Activated naive CD4-positive, alpha-beta T cell treated with anti-CD3 and anti-CD28 coated beads, Interleukin-2, amount 10 ng/mL, durations not matched to agents 7 days and 5 days (primary cell): ENCODE measurements at regions of chr2 and their contacts with region 1.

Region 1: GRCh38 chr2:24827321-24828237 is 34.4 kb downstream of the CENPO start:
- DNase-seq: peak; percentile 81
- H3K4me3 Mint-ChIP-seq: no peak overlapping the region
- H3K27ac Mint-ChIP-seq: peak overlapping the region; percentile 2
- H3K4me1 Mint-ChIP-seq: peaks cover 18% of the 10 kb centered on the region
- H3K27me3 Mint-ChIP-seq: no peaks in the 10 kb centered on the region

Region 2: GRCh38 chr2:24409700-24410556 is 417.7 kb before region 1 on chr2:
- CTCF ChIA-PET with region 1: interaction called, 55 read pairs
- DNase-seq: peak; percentile 51
- H3K4me3 Mint-ChIP-seq: no peak overlapping the region
- H3K27ac Mint-ChIP-seq: no peak overlapping the region
- H3K4me1 Mint-ChIP-seq: no peaks in the 10 kb centered on the region
- H3K27me3 Mint-ChIP-seq: peaks cover 6% of the 10 kb centered on the region

Region 3: GRCh38 chr2:24421668-24422067 is 405.9 kb before region 1 on chr2:
- CTCF ChIA-PET with region 1: interaction called, 82 read pairs
- DNase-seq: peak; percentile 70
- H3K4me3 Mint-ChIP-seq: no peak overlapping the region
- H3K27ac Mint-ChIP-seq: no peak overlapping the region
- H3K4me1 Mint-ChIP-seq: no peaks in the 10 kb centered on the region
- H3K27me3 Mint-ChIP-seq: peaks cover 18% of the 10 kb centered on the region

Region 4: GRCh38 chr2:24613154-24613814 is 214.3 kb before region 1 on chr2:
- CTCF ChIA-PET with region 1: interaction called, 39 read pairs
- DNase-seq: peak; percentile 56
- H3K4me3 Mint-ChIP-seq: no peak overlapping the region
- H3K27ac Mint-ChIP-seq: peak overlapping the region; percentile 64
- H3K4me1 Mint-ChIP-seq: peaks cover 5% of the 10 kb centered on the region
- H3K27me3 Mint-ChIP-seq: no peaks in the 10 kb centered on the region

Region 5: GRCh38 chr2:24792874-24793760 is 34.5 kb before region 1 on chr2 and contains the starts of genes CENPO and PTRHD1:
- CTCF ChIA-PET with region 1: interaction called, 17 read pairs
- DNase-seq: peak; percentile 97
- H3K4me3 Mint-ChIP-seq: peak within 1 kb of the TSS; percentile 90
- H3K27ac Mint-ChIP-seq: peak within 1 kb of the TSS; percentile 97
- H3K4me1 Mint-ChIP-seq: peaks cover 44% of the 10 kb centered on the region
- H3K27me3 Mint-ChIP-seq: no peaks in the 10 kb centered on the region

Region 6: GRCh38 chr2:24855726-24856125 is 28.1 kb after region 1 on chr2:
- CTCF ChIA-PET with region 1: no interaction called
- DNase-seq: no peak
- H3K4me3 Mint-ChIP-seq: no peak overlapping the region
- H3K27ac Mint-ChIP-seq: no peak overlapping the region
- H3K4me1 Mint-ChIP-seq: no peaks in the 10 kb centered on the region
- H3K27me3 Mint-ChIP-seq: no peaks in the 10 kb centered on the region